Dorsolateral prefrontal cortex (tissue), 120 donors: ENCODE measurements at regions of chr18 and their contacts with region 1.

Region 1: GRCh38 chr18:11040823-11041656 is 108.3 kb downstream of the PIEZO2 start:
- DNase-seq: peak in 4 of 10 donors; percentile 12 to 64 (median 47)
- H3K4me3 ChIP-seq: peak overlapping the region in 51 of 59 donors; percentile 1 to 61 (median 34)
- H3K27ac ChIP-seq: peak overlapping the region in 56 of 59 donors; percentile 11 to 92 (median 76)
- H3K27me3 ChIP-seq: no peaks in the 10 kb centered on the region
- CTCF ChIP-seq: peak; percentile 49 to 92 (median 80)

Region 2: GRCh38 chr18:11149441-11150270 is 108.6 kb after region 1 on chr18 and contains the start of gene PIEZO2:
- intact Hi-C with region 1: loop called (anchors 2 kb)
- DNase-seq: peak in 9 of 10 donors; percentile 49 to 90 (median 76)
- H3K4me3 ChIP-seq: peak within 1 kb of the TSS; percentile 39 to 82 (median 64)
- H3K27ac ChIP-seq: peak within 1 kb of the TSS in 53 of 59 donors; percentile 31 to 94 (median 83)
- H3K27me3 ChIP-seq: peaks cover 0 to 79% (median 47%) of the 10 kb centered on the region in 45 donors
- CTCF ChIP-seq: peak in 26 of 56 donors; percentile 7 to 50 (median 25)
- total RNA-seq, gene PIEZO2: 3.3 to 115 (median 29.1) TPM